ENCODE measurements at regions of chr7 and their contacts with region 1.

Region 1: DNA sequence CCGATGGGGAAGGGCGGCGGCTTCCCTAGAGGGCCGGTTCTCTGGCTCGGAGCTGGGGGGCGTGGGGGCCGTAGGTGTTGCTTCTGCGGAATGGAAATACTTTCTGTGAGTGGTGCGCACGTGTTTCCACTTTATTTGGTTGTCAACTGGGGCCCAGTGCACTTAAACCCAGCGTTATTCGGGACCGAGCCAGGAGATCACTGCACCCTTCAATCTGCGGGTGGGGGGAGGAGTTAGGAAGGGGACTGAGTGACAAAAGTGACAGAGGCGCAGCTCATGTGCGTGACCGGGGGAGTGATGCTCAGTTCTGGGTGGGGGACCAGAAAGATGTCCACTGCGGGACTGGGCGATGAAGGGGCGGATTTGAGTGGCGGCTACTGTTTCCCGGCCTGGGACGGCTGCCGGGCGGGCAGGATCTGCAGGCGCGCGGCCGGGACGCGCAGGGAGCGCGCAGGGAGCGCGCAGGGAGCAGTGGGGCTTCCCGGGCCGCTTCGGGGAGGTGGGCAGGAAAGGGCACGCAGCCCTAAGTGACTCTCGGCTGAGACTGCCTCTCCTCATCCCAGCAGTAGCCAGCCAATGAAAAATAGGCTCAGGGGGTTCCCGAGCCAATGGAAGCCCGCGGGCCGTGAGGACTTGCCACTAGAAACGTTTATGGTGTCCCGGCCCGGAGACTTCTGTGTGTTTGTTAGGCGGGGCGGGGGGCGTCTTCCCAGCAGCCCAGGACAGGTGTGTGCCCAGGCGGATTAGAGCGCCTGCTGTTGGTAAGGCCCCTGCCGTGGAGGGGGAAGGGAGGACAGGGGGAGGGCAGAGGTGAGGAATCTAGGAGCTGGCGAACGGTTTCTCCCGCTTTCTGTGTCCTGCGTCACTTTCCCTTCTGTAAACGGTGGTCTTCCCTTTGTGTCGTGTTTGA is 54.3 kb upstream of the KDM7A start:
- DNase-seq: peak; percentile 69
- ATAC-seq: peak; percentile 10
- H3K4me3 ChIP-seq: peak overlapping the region; percentile 57 to 80 (median 64)
- H3K4me3 Mint-ChIP-seq: peak overlapping the region; percentile 90
- H3K27ac ChIP-seq: peak overlapping the region; percentile 93 to 96
- H3K27ac Mint-ChIP-seq: peak overlapping the region; percentile 99
- H3K4me1 ChIP-seq: peaks cover 49 to 74% of the 10 kb centered on the region in 2 donors
- H3K4me1 Mint-ChIP-seq: peaks cover 58% of the 10 kb centered on the region
- H3K27me3 ChIP-seq: no peaks in the 10 kb centered on the region
- H3K27me3 Mint-ChIP-seq: no peaks in the 10 kb centered on the region
- CTCF ChIP-seq: no peak

Region 2: GRCh38 chr7:140062528-140063299 is 168.4 kb before region 1 on chr7 and contains the start of gene PARP12:
- CTCF ChIA-PET with region 1: no interaction called
- POLR2A ChIA-PET with region 1: no interaction called
- intact Hi-C with region 1: loop called (anchors 2 kb)
- DNase-seq: peak; percentile 96
- ATAC-seq: peak; percentile 86
- H3K4me3 ChIP-seq: peak within 1 kb of the TSS; percentile 67 to 89 (median 84)
- H3K4me3 Mint-ChIP-seq: peak within 1 kb of the TSS; percentile 98
- H3K27ac ChIP-seq: peak within 1 kb of the TSS; percentile 86 to 93
- H3K27ac Mint-ChIP-seq: peak within 1 kb of the TSS; percentile 99
- H3K4me1 ChIP-seq: peaks cover 32 to 38% of the 10 kb centered on the region in 2 donors
- H3K4me1 Mint-ChIP-seq: peaks cover 43% of the 10 kb centered on the region
- H3K27me3 ChIP-seq: no peaks in the 10 kb centered on the region
- H3K27me3 Mint-ChIP-seq: no peaks in the 10 kb centered on the region
- CTCF ChIP-seq: no peak
- total RNA-seq, gene PARP12: 160 and 177 TPM in 2 replicates

Region 3: DNA sequence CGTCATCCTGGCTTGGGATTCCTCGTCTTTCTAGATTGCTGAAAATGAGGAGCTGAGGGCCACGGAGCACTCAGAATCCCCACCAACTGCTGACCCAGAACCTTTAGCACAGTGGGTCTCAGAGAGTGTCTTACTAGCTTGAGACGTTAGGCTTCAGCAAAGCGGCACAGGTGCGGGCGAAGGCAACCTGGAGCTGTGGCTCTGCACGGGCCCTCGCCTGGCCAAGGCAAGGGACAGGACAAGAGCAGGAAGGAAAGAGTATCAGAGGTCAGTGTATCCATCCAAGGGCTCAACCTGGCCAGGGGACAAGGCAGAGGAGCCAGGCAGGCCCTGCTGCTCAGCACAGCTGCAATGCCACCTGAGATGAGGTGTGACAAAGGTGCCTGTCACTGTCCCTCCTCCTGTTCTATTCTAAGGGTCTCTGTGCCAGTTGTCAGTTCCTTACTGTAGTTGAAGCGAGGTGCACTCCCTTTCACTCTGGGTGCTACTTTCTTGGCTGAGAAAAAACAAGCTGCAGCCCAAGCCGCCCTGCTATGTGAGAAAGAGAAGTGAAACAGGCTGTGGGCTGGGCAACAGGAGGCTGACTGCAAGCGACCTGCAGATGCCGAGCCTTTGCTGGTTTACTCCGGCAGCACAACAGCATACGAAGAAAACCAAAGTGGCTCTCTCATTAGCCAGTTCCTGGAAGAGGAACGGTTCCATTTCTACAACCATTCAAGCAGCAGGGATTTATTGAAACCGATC is 21.1 kb before region 1 on chr7:
- CTCF ChIA-PET with region 1: interaction called, 6 read pairs
- POLR2A ChIA-PET with region 1: interaction called, 65 read pairs
- intact Hi-C with region 1: loop called (anchors 1 kb)
- DNase-seq: peak; percentile 92
- ATAC-seq: peak; percentile 94
- H3K4me3 ChIP-seq: peak overlapping the region in 3 of 5 experiments; percentile 4 to 52 (median 36)
- H3K4me3 Mint-ChIP-seq: peak overlapping the region; percentile 85
- H3K27ac ChIP-seq: peak overlapping the region; percentile 86 to 94
- H3K27ac Mint-ChIP-seq: peak overlapping the region; percentile 100
- H3K4me1 ChIP-seq: peaks cover 85 to 88% of the 10 kb centered on the region in 2 donors
- H3K4me1 Mint-ChIP-seq: peaks cover 84% of the 10 kb centered on the region
- H3K27me3 ChIP-seq: no peaks in the 10 kb centered on the region
- H3K27me3 Mint-ChIP-seq: no peaks in the 10 kb centered on the region
- CTCF ChIP-seq: no peak

Region 4: GRCh38 chr7:140397784-140398750 is 167.0 kb after region 1 on chr7 and contains the start of gene SLC37A3:
- CTCF ChIA-PET with region 1: no interaction called
- POLR2A ChIA-PET with region 1: no interaction called
- intact Hi-C with region 1: loop called (anchors 10 kb)
- DNase-seq: peak; percentile 86
- ATAC-seq: peak; percentile 97
- H3K4me3 ChIP-seq: peak within 1 kb of the TSS; percentile 62 to 69 (median 67)
- H3K4me3 Mint-ChIP-seq: peak within 1 kb of the TSS; percentile 98
- H3K27ac ChIP-seq: peak within 1 kb of the TSS in 1 of 2 donors; percentile 75
- H3K27ac Mint-ChIP-seq: peak within 1 kb of the TSS; percentile 83
- H3K4me1 ChIP-seq: peaks cover 7 to 11% of the 10 kb centered on the region in 2 donors
- H3K4me1 Mint-ChIP-seq: peaks cover 13% of the 10 kb centered on the region
- H3K27me3 ChIP-seq: no peaks in the 10 kb centered on the region
- H3K27me3 Mint-ChIP-seq: peaks cover 3% of the 10 kb centered on the region
- CTCF ChIP-seq: no peak
- total RNA-seq, gene SLC37A3: 20.1 TPM in 2 replicates

Region 5: DNA sequence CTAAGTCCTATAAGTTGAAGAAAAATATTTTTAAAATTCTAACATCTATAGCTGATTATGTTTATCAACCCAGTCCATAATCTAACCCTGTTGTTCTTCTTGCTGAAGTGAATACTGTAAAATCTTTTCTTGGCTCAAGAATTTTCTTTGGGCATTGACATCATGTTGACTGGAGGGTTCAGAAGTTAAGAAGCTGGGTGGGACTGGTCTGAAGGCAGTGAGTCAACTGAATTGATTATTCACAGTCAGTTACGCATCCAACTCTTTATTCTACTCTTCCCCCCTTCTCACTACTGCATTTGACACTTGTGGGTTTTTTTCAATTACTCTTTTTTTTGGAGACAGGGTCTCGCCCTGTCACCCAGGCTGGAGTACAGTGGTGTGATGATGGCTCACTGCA is 378.5 kb after region 1 on chr7:
- CTCF ChIA-PET with region 1: no interaction called
- POLR2A ChIA-PET with region 1: no interaction called
- intact Hi-C with region 1: no loop called
- DNase-seq: no peak
- ATAC-seq: no peak
- H3K4me3 ChIP-seq: no peak overlapping the region
- H3K4me3 Mint-ChIP-seq: no peak overlapping the region
- H3K27ac ChIP-seq: no peak overlapping the region
- H3K27ac Mint-ChIP-seq: no peak overlapping the region
- H3K4me1 ChIP-seq: no peaks in the 10 kb centered on the region
- H3K4me1 Mint-ChIP-seq: no peaks in the 10 kb centered on the region
- H3K27me3 ChIP-seq: no peaks in the 10 kb centered on the region
- H3K27me3 Mint-ChIP-seq: peaks cover 9% of the 10 kb centered on the region
- CTCF ChIP-seq: no peak